Activated naive CD8-positive, alpha-beta T cell treated with anti-CD3 and anti-CD28 coated beads, Interleukin-2, amount 10 ng/mL, durations not matched to agents 7 days and 5 days (primary cell): ENCODE measurements at regions of chr12 and their contacts with region 1.

Region 1: GRCh38 chr12:103965590-103966504 is at the start of gene TDG:
- DNase-seq: peak; percentile 89
- ATAC-seq: peak; percentile 96
- H3K4me3 Mint-ChIP-seq: peak within 1 kb of the TSS; percentile 95
- H3K27ac Mint-ChIP-seq: peak within 1 kb of the TSS; percentile 94
- H3K4me1 Mint-ChIP-seq: peaks cover 42% of the 10 kb centered on the region
- H3K27me3 Mint-ChIP-seq: no peaks in the 10 kb centered on the region
- total RNA-seq, gene TDG: 32.5 to 37.6 TPM

Region 2: GRCh38 chr12:103948746-103949406 is 17.0 kb before region 1 on chr12:
- POLR2A ChIA-PET with region 1: interaction called, 104 read pairs
- DNase-seq: no peak
- ATAC-seq: peak; percentile 29
- H3K4me3 Mint-ChIP-seq: peak overlapping the region; percentile 6
- H3K27ac Mint-ChIP-seq: peak overlapping the region; percentile 26
- H3K4me1 Mint-ChIP-seq: peaks cover 34% of the 10 kb centered on the region
- H3K27me3 Mint-ChIP-seq: no peaks in the 10 kb centered on the region

Region 3: DNA sequence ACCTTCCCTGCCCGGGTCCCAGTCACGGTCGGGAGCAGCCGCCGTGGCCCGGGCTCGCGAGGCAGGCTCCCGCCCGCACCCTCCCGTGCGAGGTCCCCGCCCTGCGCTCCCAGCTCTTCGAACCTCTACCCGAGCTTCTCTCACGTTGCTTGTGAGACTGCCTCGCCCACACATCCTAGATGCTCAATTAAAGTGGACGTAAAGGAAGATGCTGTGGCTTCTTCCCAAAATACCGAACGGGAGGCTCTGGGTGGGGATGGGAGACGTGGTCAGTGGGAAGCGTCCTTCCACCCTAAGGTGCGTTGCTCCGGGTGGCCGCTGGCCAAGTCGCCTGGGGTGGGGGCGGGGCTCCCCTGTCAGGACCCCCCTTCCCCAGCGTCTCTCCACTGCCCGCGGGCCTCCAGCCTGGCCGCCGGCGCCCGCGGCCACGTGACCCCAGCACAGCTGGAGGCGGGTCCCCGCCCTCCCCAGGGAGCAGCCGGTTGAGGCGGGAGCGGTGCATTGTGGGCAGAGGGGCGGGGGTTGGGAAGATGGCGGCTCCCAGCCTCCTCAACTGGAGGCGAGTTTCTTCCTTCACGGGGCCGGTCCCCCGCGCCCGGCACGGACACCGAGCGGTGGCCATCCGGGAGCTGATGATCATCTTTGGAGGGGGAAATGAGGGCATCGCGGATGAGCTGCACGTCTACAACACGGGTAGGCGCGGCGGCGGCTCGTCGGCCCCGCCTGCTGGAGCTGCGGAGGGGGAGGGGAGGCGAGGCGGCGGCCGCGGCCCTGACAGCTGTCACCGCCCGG is 98.4 kb after region 1 on chr12 and contains the start of gene HCFC2:
- POLR2A ChIA-PET with region 1: interaction called, 15 read pairs
- DNase-seq: peak; percentile 93
- ATAC-seq: peak; percentile 90
- H3K4me3 Mint-ChIP-seq: peak within 1 kb of the TSS; percentile 92
- H3K27ac Mint-ChIP-seq: peak within 1 kb of the TSS; percentile 90
- H3K4me1 Mint-ChIP-seq: peaks cover 24% of the 10 kb centered on the region
- H3K27me3 Mint-ChIP-seq: peaks cover 23% of the 10 kb centered on the region
- total RNA-seq, gene HCFC2: 12.7 to 13.5 TPM

Region 4: GRCh38 chr12:104137913-104138796 is 172.3 kb after region 1 on chr12 and contains the start of gene NFYB:
- POLR2A ChIA-PET with region 1: interaction called, 21 read pairs
- DNase-seq: peak; percentile 94
- ATAC-seq: peak; percentile 98
- H3K4me3 Mint-ChIP-seq: peak within 1 kb of the TSS; percentile 89
- H3K27ac Mint-ChIP-seq: peak within 1 kb of the TSS; percentile 88
- H3K4me1 Mint-ChIP-seq: peaks cover 14% of the 10 kb centered on the region
- H3K27me3 Mint-ChIP-seq: peaks cover 18% of the 10 kb centered on the region
- total RNA-seq, gene NFYB: 24.8 to 28.5 TPM